ENCODE measurements at regions of chr1 and their contacts with region 1.

Region 1: GRCh38 chr1:181033799-181034451 is at the start of gene MR1:
- DNase-seq: peak in 8 of 10 donors; percentile 27 to 91 (median 62)
- ATAC-seq: peak; percentile 98
- H3K4me3 Mint-ChIP-seq: peak within 1 kb of the TSS; percentile 94 to 99 (median 98)
- H3K27ac Mint-ChIP-seq: peak within 1 kb of the TSS; percentile 98 to 100 (median 99)
- H3K4me1 Mint-ChIP-seq: peaks cover 27 to 69% (median 57%) of the 10 kb centered on the region in 4 donors
- H3K27me3 Mint-ChIP-seq: no peaks in the 10 kb centered on the region
- polyA plus RNA-seq, gene MR1: 27.8 to 35.5 (median 33.4) TPM

Region 2: DNA sequence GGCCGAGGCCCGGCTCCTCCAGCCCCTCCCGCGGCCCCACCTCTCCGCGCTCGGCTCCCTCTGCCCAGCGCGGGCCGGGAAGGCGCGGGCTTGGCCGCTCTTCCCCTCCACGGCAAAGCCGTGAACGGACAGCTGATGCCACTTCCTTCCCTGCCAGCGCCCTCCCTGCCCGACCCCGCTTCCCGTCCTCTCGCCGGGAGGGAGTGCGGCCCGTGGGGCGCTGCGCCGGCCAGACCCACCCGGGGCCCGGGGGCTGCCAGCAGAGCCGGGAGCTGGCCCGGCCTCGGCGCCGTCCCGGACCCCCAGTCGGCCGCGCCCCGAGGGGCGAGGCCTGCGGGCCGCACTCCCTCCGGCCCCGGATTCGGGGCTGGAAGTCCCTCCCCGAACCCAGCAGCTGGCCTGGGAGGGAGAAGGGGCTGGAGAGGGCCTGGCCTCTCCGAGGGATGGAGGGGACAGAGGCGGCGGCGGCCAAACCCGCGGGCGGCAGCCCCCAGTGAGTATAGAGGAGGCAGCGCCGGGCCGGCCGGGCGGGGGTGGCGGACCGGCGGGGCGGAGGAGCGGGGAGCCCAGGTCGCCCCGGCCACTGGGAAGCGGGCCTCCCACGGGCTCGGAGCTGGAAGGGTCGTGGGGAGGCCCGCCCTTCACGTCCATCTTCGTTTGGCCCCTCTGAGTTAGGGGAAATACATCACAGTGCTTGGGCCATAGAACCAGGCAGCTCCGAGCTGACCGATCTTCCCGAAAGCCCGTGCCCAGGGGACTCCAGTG is 120.9 kb before region 1 on chr1 and contains the start of gene KIAA1614:
- POLR2A ChIA-PET with region 1: no interaction called
- DNase-seq: peak in 1 of 10 donors; percentile 26
- ATAC-seq: no peak
- H3K4me3 Mint-ChIP-seq: peak within 1 kb of the TSS; percentile 8 to 66 (median 45)
- H3K27ac Mint-ChIP-seq: no peak within 1 kb of the TSS
- H3K4me1 Mint-ChIP-seq: peaks cover 0 to 17% (median 10%) of the 10 kb centered on the region in 4 donors
- H3K27me3 Mint-ChIP-seq: peaks cover 25 to 57% (median 36%) of the 10 kb centered on the region in 5 donors
- polyA plus RNA-seq, gene KIAA1614: 0.04 to 0.05 TPM in 2 of 3 donors, not detected in the other

Region 3: GRCh38 chr1:181021811-181022434 is 12.0 kb before region 1 on chr1:
- POLR2A ChIA-PET with region 1: interaction called, 40 read pairs
- DNase-seq: peak in 9 of 10 donors; percentile 28 to 74 (median 44)
- ATAC-seq: peak; percentile 40 to 48
- H3K4me3 Mint-ChIP-seq: peak overlapping the region; percentile 89 to 99 (median 96)
- H3K27ac Mint-ChIP-seq: peak overlapping the region; percentile 87 to 100 (median 95)
- H3K4me1 Mint-ChIP-seq: peaks cover 25 to 52% (median 49%) of the 10 kb centered on the region in 4 donors
- H3K27me3 Mint-ChIP-seq: peaks cover 0 to 3% (median 0%) of the 10 kb centered on the region in 5 donors

Region 4: DNA sequence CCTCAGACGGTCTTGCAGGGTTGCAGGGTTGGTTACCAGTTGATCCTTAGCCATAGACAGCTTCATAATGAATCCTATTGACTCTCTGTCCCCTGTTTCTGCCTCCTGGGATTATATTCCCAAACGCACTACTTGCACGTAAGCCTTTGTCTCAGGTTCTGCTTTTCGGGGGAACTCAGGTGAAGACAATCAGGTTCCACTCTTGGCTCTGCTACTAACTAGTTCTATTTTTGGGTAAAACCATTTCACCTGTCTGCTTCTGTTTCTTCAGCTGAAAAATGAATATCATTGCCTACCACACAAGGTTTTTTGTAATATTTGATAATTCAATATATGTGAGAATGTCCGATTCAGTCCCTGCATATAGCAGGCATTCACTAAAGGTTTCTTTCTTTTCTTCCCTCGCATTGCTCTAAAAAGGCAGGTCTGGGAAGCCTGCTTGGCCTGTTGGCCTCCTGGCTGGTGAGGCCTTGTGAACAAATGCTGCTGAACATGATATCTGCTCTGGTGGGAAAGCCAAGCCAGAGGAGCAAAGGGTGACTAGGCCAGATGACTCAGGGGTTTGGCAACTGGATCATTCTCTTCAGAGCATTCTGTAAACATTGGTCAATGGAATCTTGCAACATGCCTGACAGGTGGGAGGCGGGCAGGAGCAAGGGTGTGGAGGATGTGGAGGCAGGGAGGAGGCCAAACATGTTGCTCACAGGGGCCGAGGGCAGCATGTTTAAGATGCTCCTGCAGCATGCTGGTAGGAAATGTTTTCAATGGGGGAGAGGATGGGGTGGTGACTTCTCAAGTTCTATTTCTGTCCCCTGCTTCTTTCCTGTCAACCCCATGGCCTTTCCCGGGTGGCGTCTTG is 78.4 kb after region 1 on chr1:
- POLR2A ChIA-PET with region 1: no interaction called
- DNase-seq: no peak
- ATAC-seq: no peak
- H3K4me3 Mint-ChIP-seq: no peak overlapping the region
- H3K27ac Mint-ChIP-seq: peak overlapping the region in 1 of 10 donors; percentile 31
- H3K4me1 Mint-ChIP-seq: peaks cover 7 to 32% (median 12%) of the 10 kb centered on the region in 4 donors
- H3K27me3 Mint-ChIP-seq: peaks cover 0 to 3% (median 0%) of the 10 kb centered on the region in 5 donors

Measured in naive thymus-derived CD8-positive, alpha-beta T cell (primary cell).